Endothelial cell of umbilical vein (primary cell): ENCODE measurements at regions of chr3 and their contacts with region 1.

Region 1: GRCh38 chr3:46923559-46924350 is 46.2 kb downstream of the PTH1R start:
- DNase-seq: peak; percentile 53
- H3K4me3 ChIP-seq: no peak overlapping the region
- H3K27ac ChIP-seq: no peak overlapping the region
- H3K4me1 ChIP-seq: peaks cover 19% of the 10 kb centered on the region
- H3K27me3 ChIP-seq: no peaks in the 10 kb centered on the region
- CTCF ChIP-seq: peak; percentile 69 to 79
- POLR2A ChIP-seq: no peak

Region 2: GRCh38 chr3:46935168-46935858 is 11.6 kb after region 1 on chr3:
- CTCF ChIA-PET with region 1: interaction called, 37 read pairs
- POLR2A ChIA-PET with region 1: interaction called, 8 read pairs
- dilution Hi-C with region 1: no loop called
- intact Hi-C with region 1: no loop called
- DNase-seq: peak; percentile 98
- H3K4me3 ChIP-seq: no peak overlapping the region
- H3K27ac ChIP-seq: peak overlapping the region; percentile 87
- H3K4me1 ChIP-seq: peaks cover 62% of the 10 kb centered on the region
- H3K27me3 ChIP-seq: no peaks in the 10 kb centered on the region
- CTCF ChIP-seq: peak; percentile 50 to 72
- POLR2A ChIP-seq: peak; percentile 60

Region 3: DNA sequence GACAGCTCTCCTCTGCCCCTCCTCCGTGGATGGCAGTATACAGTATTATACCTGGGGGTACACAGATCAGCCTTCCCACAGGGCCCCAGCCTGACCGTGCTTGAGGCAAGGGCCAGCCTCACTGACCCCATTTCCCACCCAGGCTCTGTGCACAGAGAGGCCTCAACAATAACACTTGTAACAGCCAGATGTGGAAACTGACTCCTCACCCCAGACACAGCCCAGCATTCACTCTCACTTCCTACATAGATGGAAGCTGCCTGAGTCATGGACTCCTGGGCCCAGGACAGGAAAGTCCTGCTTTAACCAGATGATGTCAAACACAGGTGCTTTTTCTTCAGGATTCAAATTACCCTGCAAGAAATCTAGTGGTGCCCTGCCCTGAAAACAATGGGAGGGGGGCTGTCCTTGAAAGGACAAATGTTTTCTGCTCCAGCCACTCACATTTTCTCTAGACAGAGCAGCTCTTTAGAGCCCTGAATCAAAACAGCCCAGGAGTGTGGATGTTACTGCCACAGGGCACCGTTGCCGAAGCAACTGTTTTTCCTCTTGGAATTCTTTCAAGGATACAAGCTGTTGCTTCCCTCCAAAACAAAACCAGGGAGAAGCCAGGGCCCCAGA is 36.4 kb after region 1 on chr3:
- CTCF ChIA-PET with region 1: interaction called, 17 read pairs
- POLR2A ChIA-PET with region 1: no interaction called
- dilution Hi-C with region 1: no loop called
- intact Hi-C with region 1: no loop called
- DNase-seq: peak; percentile 92
- H3K4me3 ChIP-seq: peak overlapping the region in 2 of 3 experiments; percentile 0 to 40
- H3K27ac ChIP-seq: peak overlapping the region; percentile 82
- H3K4me1 ChIP-seq: peaks cover 33% of the 10 kb centered on the region
- H3K27me3 ChIP-seq: no peaks in the 10 kb centered on the region
- CTCF ChIP-seq: no peak
- POLR2A ChIP-seq: no peak

Region 4: GRCh38 chr3:46976326-46977190 is 52.8 kb after region 1 on chr3 and contains the start of gene CCDC12:
- CTCF ChIA-PET with region 1: interaction called, 52 read pairs
- POLR2A ChIA-PET with region 1: interaction called, 3 read pairs
- dilution Hi-C with region 1: no loop called
- intact Hi-C with region 1: loop called (anchors 2 kb)
- DNase-seq: peak; percentile 99
- H3K4me3 ChIP-seq: peak within 1 kb of the TSS; percentile 52 to 86 (median 79)
- H3K27ac ChIP-seq: peak within 1 kb of the TSS; percentile 82
- H3K4me1 ChIP-seq: peaks cover 39% of the 10 kb centered on the region
- H3K27me3 ChIP-seq: no peaks in the 10 kb centered on the region
- CTCF ChIP-seq: no peak
- POLR2A ChIP-seq: peak; percentile 92
- total RNA-seq, gene CCDC12: 45.0 and 50.5 TPM in 2 replicates

Region 5: GRCh38 chr3:46998121-46998851 is 74.5 kb after region 1 on chr3:
- CTCF ChIA-PET with region 1: interaction called, 50 read pairs
- POLR2A ChIA-PET with region 1: no interaction called
- dilution Hi-C with region 1: no loop called
- intact Hi-C with region 1: loop called (anchors 1 kb)
- DNase-seq: peak; percentile 48
- H3K4me3 ChIP-seq: no peak overlapping the region
- H3K27ac ChIP-seq: no peak overlapping the region
- H3K4me1 ChIP-seq: no peaks in the 10 kb centered on the region
- H3K27me3 ChIP-seq: no peaks in the 10 kb centered on the region
- CTCF ChIP-seq: peak; percentile 84 to 93
- POLR2A ChIP-seq: peak; percentile 29

Region 6: GRCh38 chr3:47324278-47324865 is 400.6 kb after region 1 on chr3:
- CTCF ChIA-PET with region 1: interaction called, 21 read pairs
- POLR2A ChIA-PET with region 1: no interaction called
- dilution Hi-C with region 1: no loop called
- intact Hi-C with region 1: loop called (anchors 10 kb)
- DNase-seq: peak; percentile 77
- H3K4me3 ChIP-seq: no peak overlapping the region
- H3K27ac ChIP-seq: no peak overlapping the region
- H3K4me1 ChIP-seq: no peaks in the 10 kb centered on the region
- H3K27me3 ChIP-seq: no peaks in the 10 kb centered on the region
- CTCF ChIP-seq: peak; percentile 60 to 72
- POLR2A ChIP-seq: no peak

Region 7: DNA sequence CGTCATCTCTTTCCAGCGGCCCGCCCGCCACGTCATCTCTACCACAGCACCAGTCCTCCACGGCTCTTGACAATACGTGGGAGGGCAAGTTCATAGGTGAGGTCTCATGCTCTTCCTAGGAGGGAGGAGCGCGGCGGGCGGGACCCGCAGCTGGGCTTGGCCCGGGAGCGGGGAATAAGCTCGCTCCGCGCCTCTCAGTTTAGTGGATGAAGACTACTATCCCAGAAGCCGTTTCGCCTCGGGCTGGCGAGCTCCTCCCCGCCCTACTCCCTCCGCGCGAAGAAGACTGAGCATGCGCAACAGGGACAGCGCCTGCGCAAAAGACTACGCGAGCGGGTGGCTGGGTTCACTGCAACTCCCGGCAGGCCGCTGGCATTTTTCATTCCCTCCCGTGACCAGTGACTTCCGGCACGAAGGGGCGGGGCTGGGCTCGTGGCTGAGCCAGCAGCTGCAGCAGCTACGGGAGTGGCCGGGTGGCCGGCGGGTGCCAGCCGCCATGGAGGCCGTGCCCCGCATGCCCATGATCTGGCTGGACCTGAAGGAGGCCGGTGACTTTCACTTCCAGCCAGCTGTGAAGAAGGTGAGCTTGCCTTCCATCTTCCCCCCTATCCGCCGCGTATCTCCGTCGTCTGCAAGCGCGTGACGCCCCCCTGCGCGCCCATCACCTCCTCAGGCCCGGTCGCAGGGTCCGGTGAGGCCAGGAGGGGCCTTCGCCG is 457.0 kb after region 1 on chr3 and contains the start of gene PTPN23:
- CTCF ChIA-PET with region 1: no interaction called
- POLR2A ChIA-PET with region 1: no interaction called
- dilution Hi-C with region 1: no loop called
- intact Hi-C with region 1: no loop called
- DNase-seq: peak; percentile 100
- H3K4me3 ChIP-seq: peak within 1 kb of the TSS; percentile 63 to 81 (median 67)
- H3K27ac ChIP-seq: peak within 1 kb of the TSS; percentile 79
- H3K4me1 ChIP-seq: peaks cover 13% of the 10 kb centered on the region
- H3K27me3 ChIP-seq: no peaks in the 10 kb centered on the region
- CTCF ChIP-seq: no peak
- POLR2A ChIP-seq: peak; percentile 96
- total RNA-seq, gene PTPN23: 57.4 and 63.5 TPM in 2 replicates